ENCODE measurements at regions of chr17 and their contacts with region 1.

Region 1: GRCh38 chr17:78840725-78841611 is at the start of gene USP36:
- DNase-seq: peak; percentile 100
- ATAC-seq: peak; percentile 88
- H3K4me3 Mint-ChIP-seq: peak within 1 kb of the TSS; percentile 87
- H3K27ac Mint-ChIP-seq: peak within 1 kb of the TSS; percentile 95
- H3K4me1 Mint-ChIP-seq: peaks cover 33% of the 10 kb centered on the region
- H3K27me3 Mint-ChIP-seq: no peaks in the 10 kb centered on the region
- CTCF ChIP-seq: no peak
- total RNA-seq, gene USP36: 86.3 to 93.2 TPM

Region 2: DNA sequence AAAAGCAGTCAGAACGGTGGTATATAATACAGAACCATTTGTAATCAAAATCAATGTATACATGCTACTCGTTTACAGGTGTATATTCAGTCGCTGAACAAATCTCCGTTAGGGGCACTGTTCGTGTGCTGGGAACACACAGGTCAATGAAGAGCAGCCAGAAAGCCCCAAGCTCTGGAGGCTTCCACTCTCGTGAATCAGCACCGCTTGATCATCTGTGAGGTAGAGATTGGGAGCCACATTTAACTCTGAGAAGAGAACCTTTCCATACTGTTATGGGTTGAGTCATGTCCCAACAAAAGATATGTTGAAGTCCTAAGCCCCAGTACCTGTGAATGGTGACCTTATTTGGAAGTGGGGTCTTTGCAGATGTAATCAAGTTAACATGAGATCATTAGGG is 53.5 kb before region 1 on chr17:
- CTCF ChIA-PET with region 1: no interaction called
- POLR2A ChIA-PET with region 1: no interaction called
- intact Hi-C with region 1: no loop called
- DNase-seq: no peak
- ATAC-seq: no peak
- H3K4me3 Mint-ChIP-seq: no peak overlapping the region
- H3K27ac Mint-ChIP-seq: peak overlapping the region; percentile 46
- H3K4me1 Mint-ChIP-seq: peaks cover 58% of the 10 kb centered on the region
- H3K27me3 Mint-ChIP-seq: no peaks in the 10 kb centered on the region
- CTCF ChIP-seq: no peak

Region 3: DNA sequence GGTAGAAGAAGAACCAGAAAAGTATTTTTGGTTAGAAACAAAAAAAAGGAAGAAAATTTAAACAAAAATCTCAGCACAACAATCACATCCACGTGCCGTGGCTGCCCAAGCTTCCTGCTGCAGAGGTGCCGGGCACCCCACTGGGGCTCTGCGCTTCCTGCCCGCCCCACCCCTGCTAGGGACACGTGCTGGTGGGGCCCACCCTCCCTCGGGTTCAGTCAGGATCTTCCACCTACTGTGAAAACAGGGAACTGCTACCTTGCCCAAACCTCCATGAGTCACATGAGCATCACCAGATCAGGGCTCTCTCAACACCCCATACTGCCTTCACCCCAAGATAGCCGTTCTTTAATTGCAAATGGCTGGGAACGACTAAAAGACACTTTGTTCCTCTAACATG is 34.5 kb before region 1 on chr17:
- CTCF ChIA-PET with region 1: no interaction called
- POLR2A ChIA-PET with region 1: interaction called, 6 read pairs
- intact Hi-C with region 1: loop called (anchors 5 kb)
- DNase-seq: peak; percentile 71
- ATAC-seq: peak; percentile 55
- H3K4me3 Mint-ChIP-seq: no peak overlapping the region
- H3K27ac Mint-ChIP-seq: peak overlapping the region; percentile 86
- H3K4me1 Mint-ChIP-seq: peaks cover 41% of the 10 kb centered on the region
- H3K27me3 Mint-ChIP-seq: no peaks in the 10 kb centered on the region
- CTCF ChIP-seq: no peak

Measured in activated CD8-positive, alpha-beta T cell treated with anti-CD3 and anti-CD28 coated beads for 36 hours (primary cell).